Activated naive CD4-positive, alpha-beta T cell treated with anti-CD3 and anti-CD28 coated beads for 36 hours (primary cell): ENCODE measurements at regions of chr21 and their contacts with region 1.

Region 1: GRCh38 chr21:36976882-36977651 is 10.6 kb upstream of the HLCS start:
- DNase-seq: peak; percentile 75
- H3K4me3 Mint-ChIP-seq: no peak overlapping the region
- H3K27ac Mint-ChIP-seq: no peak overlapping the region
- H3K4me1 Mint-ChIP-seq: peaks cover 23% of the 10 kb centered on the region
- H3K27me3 Mint-ChIP-seq: peaks cover 9% of the 10 kb centered on the region

Region 2: DNA sequence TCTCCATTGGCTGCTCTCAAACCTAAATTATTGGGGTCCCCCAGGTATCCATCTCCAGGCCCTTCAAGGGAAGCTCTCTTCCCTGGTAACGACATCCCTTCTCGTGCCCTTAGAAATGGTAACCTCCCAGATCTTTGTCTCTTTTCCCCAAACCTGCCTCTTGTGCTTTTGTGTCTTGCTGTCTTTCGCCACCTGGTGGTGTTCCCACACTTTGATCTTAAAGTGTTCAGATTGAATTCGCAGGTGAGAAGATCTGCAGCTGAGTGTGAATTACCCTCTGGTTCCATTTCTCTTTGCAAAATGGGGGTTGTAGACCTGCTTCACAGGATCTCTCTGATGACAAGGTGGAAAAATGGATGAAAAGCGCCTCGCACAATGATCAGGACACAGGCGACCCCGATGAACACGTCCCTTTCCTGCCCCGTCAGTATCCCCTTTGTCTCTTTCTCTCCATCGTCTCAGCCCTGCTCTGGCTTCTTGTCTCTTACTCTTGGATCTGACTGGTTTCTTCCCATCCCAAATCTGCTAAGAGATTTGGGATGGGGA is 767.4 kb before region 1 on chr21:
- CTCF ChIA-PET with region 1: no interaction called
- intact Hi-C with region 1: no loop called
- DNase-seq: peak; percentile 71
- H3K4me3 Mint-ChIP-seq: no peak overlapping the region
- H3K27ac Mint-ChIP-seq: no peak overlapping the region
- H3K4me1 Mint-ChIP-seq: peaks cover 12% of the 10 kb centered on the region
- H3K27me3 Mint-ChIP-seq: no peaks in the 10 kb centered on the region

Region 3: DNA sequence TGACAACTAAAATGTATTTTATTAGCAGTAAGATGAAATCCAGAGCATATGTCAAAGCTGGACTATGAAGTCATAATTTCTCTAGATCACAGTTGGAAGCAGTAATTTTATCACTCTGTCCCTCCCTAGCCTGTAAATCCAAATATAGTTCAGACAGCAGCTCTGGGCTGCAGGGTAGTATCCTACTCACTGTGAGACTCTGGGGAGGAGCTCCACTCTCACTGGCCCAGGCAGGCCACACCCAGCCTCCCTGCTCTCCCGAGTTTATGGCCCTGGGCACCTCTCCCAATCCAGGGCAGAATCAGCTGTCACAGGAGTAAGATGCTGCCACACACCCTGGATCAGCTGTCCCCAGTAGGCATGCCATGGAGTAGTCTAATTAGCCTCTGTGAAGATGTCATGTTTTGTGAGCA is 141.7 kb before region 1 on chr21:
- CTCF ChIA-PET with region 1: no interaction called
- intact Hi-C with region 1: no loop called
- DNase-seq: no peak
- H3K4me3 Mint-ChIP-seq: no peak overlapping the region
- H3K27ac Mint-ChIP-seq: no peak overlapping the region
- H3K4me1 Mint-ChIP-seq: peaks cover 2% of the 10 kb centered on the region
- H3K27me3 Mint-ChIP-seq: no peaks in the 10 kb centered on the region

Region 4: DNA sequence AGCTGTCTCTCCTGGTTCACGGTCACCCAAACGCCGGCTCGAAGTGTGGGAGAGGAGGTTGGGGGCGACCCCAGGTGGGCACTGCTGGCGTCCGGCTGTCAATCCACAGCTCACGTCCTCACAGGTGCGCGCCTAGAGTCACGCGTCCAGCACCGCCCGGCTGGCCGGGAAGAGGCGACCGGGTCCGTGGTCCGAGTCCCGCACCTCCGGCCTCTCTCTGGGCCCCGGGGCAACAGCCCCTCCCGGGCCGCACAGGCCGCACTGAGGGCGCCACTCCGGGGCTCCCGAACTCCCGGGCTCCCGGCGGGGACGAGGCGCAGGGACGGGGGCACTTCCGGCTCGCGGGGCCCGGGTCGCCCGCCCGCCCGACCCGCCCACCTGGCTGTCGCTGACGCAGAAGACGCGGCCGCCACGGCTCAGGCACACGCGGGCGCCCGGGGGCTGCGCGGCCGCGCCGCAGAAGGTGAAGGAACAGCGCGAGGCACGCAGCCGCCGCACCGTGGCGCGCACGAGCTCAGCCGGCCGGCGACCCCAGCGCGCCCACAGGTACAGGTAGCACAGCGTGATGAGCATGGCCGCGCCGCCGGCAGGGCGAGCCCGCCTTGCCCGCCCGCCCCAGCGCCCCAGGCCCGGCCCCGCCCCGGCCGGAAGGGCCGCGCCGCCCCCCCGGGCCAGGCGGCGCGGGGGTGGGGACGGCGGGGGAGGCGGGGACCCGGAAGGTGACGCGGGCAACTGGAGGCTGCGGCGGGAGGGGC is 10.8 kb before region 1 on chr21 and contains the start of gene HLCS:
- CTCF ChIA-PET with region 1: interaction called, 6 read pairs
- intact Hi-C with region 1: loop called (anchors 1 kb)
- DNase-seq: peak; percentile 72
- H3K4me3 Mint-ChIP-seq: peak within 1 kb of the TSS; percentile 78
- H3K27ac Mint-ChIP-seq: peak within 1 kb of the TSS; percentile 86
- H3K4me1 Mint-ChIP-seq: peaks cover 12% of the 10 kb centered on the region
- H3K27me3 Mint-ChIP-seq: no peaks in the 10 kb centered on the region
- total RNA-seq, gene HLCS: 12.5 to 12.6 TPM

Region 5: DNA sequence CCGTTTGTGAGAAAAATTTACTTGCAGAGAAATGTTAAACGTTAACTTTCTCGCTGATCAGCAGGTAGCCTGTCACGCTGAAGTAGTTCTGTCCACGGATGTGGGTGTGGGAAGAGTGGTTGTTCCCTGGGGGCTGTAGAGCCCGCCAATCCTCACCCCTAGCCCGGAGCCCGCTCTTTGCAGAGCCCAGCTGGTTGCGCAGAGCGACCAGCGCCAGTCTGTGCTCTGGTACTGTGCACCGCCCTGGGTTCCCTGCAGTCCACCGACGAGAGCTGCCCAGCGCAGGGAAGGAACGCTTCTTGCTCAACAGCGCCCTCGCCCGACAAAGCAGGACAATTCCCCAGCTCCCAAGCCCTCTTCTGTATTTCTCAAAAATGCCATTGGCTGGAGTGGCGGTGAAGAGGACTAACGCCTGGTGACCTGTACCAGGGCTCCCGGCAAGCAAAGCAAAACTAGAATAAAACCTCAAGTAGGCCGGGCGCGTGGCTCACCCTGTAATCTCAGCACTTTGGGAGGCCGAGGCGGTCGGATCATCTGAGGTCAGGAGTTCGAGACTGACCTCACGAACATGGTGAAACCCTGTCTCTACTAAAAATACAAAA is 32.8 kb after region 1 on chr21:
- CTCF ChIA-PET with region 1: interaction called, 13 read pairs
- intact Hi-C with region 1: loop called (anchors 1 kb)
- DNase-seq: peak; percentile 87
- H3K4me3 Mint-ChIP-seq: no peak overlapping the region
- H3K27ac Mint-ChIP-seq: no peak overlapping the region
- H3K4me1 Mint-ChIP-seq: peaks cover 14% of the 10 kb centered on the region
- H3K27me3 Mint-ChIP-seq: peaks cover 41% of the 10 kb centered on the region